IMR-90 (cell line): ENCODE measurements at regions of chr20 and their contacts with region 1.

Region 1: GRCh38 chr20:1809121-1809520 is 86.1 kb upstream of the SIRPA start:
- DNase-seq: peak; percentile 92
- ATAC-seq: peak; percentile 64
- H3K4me3 ChIP-seq: no peak overlapping the region
- H3K27ac ChIP-seq: peak overlapping the region; percentile 98
- H3K4me1 ChIP-seq: peaks cover 40% of the 10 kb centered on the region
- H3K27me3 ChIP-seq: no peaks in the 10 kb centered on the region
- CTCF ChIP-seq: no peak
- POLR2A ChIP-seq: peak; percentile 56
- RAD21 ChIP-seq: peak; percentile 27; the same call in 1 of the 2 replicates

Region 2: DNA sequence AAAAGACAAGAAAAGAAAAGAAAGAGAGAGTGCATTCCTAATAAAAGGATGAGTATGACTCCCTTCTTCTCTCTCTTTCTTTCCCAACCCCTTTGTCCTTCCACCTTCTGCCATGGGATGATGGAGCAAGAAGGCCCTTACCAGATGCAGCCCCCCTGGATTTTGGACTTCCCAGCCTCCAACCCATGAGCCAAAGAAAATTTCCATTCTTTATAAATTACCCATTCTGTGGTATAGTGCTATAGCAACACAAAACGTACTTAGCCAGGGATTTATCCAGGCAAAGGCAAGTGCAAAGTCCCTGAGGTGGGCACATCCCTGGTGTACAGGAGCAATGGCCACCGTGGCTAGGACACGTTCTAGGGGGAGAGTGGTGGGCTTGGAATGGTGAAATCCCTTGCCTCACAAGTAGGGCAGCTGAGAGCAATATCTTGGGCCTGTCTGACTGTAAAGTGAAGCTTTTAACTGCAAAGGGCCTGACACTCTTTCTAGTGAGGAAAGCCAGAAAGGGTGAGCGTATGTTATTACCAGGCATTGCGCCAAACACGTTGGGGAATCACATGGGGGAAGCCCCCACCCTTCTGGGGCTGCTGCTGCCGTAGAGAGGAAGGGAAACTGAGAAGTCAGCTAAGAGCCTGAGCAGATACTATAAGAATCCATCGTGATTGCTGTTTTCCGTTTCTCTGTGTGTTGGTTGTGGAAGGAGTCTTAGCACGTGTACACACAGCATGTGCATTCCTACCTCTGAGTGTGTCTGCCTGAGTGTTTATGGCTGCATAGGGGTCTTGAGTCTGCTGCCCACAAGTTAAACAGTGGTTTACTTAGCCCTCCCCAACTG is 35.4 kb after region 1 on chr20:
- CTCF ChIA-PET with region 1: no interaction called
- POLR2A ChIA-PET with region 1: interaction called, 4 read pairs
- dilution Hi-C with region 1: no loop called
- in situ Hi-C with region 1: no loop called
- intact Hi-C with region 1: loop called (anchors 1 kb)
- DNase-seq: peak; percentile 92
- ATAC-seq: peak; percentile 75
- H3K4me3 ChIP-seq: no peak overlapping the region
- H3K27ac ChIP-seq: peak overlapping the region; percentile 88
- H3K4me1 ChIP-seq: peaks cover 18% of the 10 kb centered on the region
- H3K27me3 ChIP-seq: no peaks in the 10 kb centered on the region
- CTCF ChIP-seq: no peak
- POLR2A ChIP-seq: no peak
- RAD21 ChIP-seq: no peak